Motor neuron (in vitro differentiated cells): ENCODE measurements at regions of chr2 and their contacts with region 1.

Region 1: DNA sequence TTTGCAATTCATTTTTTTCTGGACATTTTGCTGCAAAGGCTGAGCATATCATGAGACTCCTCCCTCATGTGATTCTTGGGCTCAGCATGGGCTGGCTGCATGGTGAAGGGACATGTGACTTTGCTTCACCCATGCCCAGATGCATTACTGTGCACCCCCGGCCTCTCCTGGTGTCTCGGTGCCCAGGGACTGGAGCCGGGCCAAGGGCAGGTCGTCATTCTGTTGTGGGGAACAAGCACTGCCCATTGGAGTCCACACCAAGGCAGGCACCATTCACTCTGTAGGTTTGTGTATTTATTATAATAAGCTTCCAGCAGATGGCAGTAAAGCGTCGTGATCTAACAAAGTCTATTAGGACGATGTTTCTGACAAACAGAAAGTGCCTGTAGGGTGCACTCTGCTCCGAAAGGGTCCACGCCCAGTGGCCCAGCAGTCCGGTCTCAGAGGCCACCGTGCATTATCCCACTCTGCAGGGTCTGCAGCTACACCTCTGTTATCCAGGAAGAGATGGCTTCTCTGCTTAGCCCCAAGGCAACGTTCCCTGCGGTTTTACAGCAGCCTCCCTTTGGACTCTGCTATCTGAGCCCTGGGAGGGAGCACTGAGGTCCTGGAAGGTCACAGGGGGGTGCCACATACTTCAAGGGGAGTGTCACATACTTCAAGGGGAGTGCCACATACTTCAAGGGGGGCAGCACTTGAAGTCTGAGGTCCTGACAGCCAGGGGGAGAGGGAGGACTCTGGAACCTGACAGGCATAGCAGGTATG is 219.6 kb downstream of the TSN start:
- ATAC-seq: peak; percentile 94 to 100 (median 96)
- H3K4me3 ChIP-seq: no peak overlapping the region
- H3K27ac ChIP-seq: no peak overlapping the region
- H3K4me1 ChIP-seq: peaks cover 11 to 13% of the 10 kb centered on the region in 2 donors

Region 2: GRCh38 chr2:122433123-122433754 is 458.2 kb after region 1 on chr2:
- in situ Hi-C with region 1: loop called in 1 of 9 experiments (anchors 25 kb)
- ATAC-seq: no peak
- H3K4me3 ChIP-seq: no peak overlapping the region
- H3K27ac ChIP-seq: no peak overlapping the region
- H3K4me1 ChIP-seq: no peaks in the 10 kb centered on the region